ENCODE measurements at regions of chr11 and their contacts with region 1.

Region 1: GRCh38 chr11:9757809-9758636 is 94.1 kb downstream of the SWAP70 start:
- DNase-seq: peak; percentile 87 to 88
- H3K4me3 ChIP-seq: peak overlapping the region; percentile 53 to 61
- H3K27ac ChIP-seq: peak overlapping the region; percentile 85 to 95
- H3K4me1 ChIP-seq: peaks cover 7 to 9% of the 10 kb centered on the region in 2 donors
- H3K27me3 ChIP-seq: no peaks in the 10 kb centered on the region
- CTCF ChIP-seq: peak; percentile 35 to 98 (median 98)
- POLR2A ChIP-seq: peak; percentile 61 to 71

Region 2: GRCh38 chr11:9875862-9876261 is 117.8 kb after region 1 on chr11:
- intact Hi-C with region 1: no loop called
- DNase-seq: no peak
- H3K4me3 ChIP-seq: no peak overlapping the region
- H3K27ac ChIP-seq: peak overlapping the region; percentile 17 to 61
- H3K4me1 ChIP-seq: no peaks in the 10 kb centered on the region
- H3K27me3 ChIP-seq: no peaks in the 10 kb centered on the region
- CTCF ChIP-seq: no peak
- POLR2A ChIP-seq: no peak

Region 3: DNA sequence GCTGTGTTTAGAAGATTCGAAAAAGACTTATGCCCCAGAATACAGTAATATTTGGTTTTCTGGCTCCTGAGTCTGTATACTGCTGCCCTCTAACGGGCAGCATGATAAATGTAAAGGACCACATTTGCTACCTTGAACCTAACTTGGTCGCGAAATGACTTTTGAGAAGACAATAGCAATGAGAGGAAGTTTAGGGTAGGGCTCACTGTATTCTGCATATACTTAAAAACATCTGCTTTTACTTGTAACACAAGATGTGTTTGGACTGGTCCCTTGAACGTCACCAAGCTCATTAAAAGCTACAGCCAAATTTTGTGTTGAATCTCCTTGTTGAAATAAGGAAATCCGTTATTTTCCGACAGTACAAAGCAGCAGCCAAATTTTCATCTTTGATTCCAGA is 215.0 kb after region 1 on chr11:
- intact Hi-C with region 1: loop called (anchors 10 kb)
- DNase-seq: peak in 1 of 2 donors; percentile 31
- H3K4me3 ChIP-seq: no peak overlapping the region
- H3K27ac ChIP-seq: peak overlapping the region in 1 of 2 donors; percentile 28
- H3K4me1 ChIP-seq: no peaks in the 10 kb centered on the region
- H3K27me3 ChIP-seq: no peaks in the 10 kb centered on the region
- CTCF ChIP-seq: peak; percentile 72 to 74 (median 72)
- POLR2A ChIP-seq: no peak

Region 4: GRCh38 chr11:10322830-10323792 is 565.1 kb after region 1 on chr11:
- intact Hi-C with region 1: loop called (anchors 10 kb)
- DNase-seq: peak; percentile 56 to 81
- H3K4me3 ChIP-seq: no peak overlapping the region
- H3K27ac ChIP-seq: peak overlapping the region; percentile 54 to 55
- H3K4me1 ChIP-seq: peaks cover 2 to 9% of the 10 kb centered on the region in 2 donors
- H3K27me3 ChIP-seq: no peaks in the 10 kb centered on the region
- CTCF ChIP-seq: peak; percentile 50 to 76 (median 62)
- POLR2A ChIP-seq: no peak